ENCODE measurements at regions of chr1 and their contacts with region 1.

Region 1: DNA sequence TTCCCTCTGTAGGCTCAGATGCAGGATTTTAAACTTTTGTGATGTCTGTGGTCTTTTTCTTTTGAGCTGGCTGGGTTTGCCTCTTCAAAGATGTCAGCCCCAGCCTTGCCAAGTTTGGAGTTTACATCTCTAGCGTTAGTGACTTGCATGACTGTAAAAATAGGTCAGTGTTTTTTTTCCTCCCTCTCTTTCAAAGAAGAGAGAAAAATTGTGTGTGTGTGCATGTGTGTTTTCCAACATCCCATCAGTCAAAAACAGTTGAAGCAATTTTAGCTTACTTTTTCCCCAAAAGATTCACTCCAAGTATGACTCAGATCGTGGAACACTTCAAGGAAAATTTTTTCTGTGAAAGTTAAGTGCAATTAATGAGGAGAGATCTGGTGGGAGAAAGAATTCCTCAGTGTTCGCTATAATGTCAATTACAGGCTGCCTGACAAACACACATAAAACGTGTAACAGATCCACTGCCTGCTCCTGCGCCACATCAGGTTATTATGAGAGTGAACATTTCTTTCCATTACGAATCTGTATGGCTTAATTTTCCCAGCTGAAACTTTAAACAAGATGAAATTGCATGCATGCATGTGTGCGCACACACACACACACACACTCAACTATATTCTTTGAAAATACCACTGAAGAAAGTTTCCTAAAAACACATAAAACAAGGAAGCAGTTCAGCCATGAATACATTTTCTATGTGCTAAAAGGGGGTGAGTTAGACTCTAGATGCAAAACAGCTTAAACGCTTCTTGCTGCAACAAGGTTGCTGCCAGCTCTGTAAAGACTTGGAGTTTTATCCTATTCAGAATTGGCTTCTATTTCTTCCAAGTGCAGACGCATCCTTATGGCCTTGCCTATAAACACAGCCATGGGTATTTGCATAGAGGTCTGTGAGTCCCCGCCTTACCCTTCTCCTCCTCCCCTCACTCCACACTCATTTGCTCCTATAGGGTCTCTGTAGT is 55.5 kb downstream of the TLR5 start:
- DNase-seq: peak; percentile 87
- H3K4me3 ChIP-seq: peak overlapping the region in 1 of 4 donors; percentile 19
- H3K27ac ChIP-seq: peak overlapping the region; percentile 60 to 87 (median 78)
- H3K4me1 ChIP-seq: peaks cover 0 to 88% (median 74%) of the 10 kb centered on the region in 4 donors
- H3K27me3 ChIP-seq: no peaks in the 10 kb centered on the region
- CTCF ChIP-seq: no peak
- EP300 ChIP-seq: peak; percentile 2 to 66 (median 34)
- POLR2A ChIP-seq: no peak

Region 2: GRCh38 chr1:223114871-223115270 is 27.3 kb after region 1 on chr1:
- intact Hi-C with region 1: loop called (anchors 2 kb)
- DNase-seq: peak; percentile 78
- H3K4me3 ChIP-seq: no peak overlapping the region
- H3K27ac ChIP-seq: peak overlapping the region; percentile 45 to 86 (median 73)
- H3K4me1 ChIP-seq: peaks cover 0 to 31% (median 26%) of the 10 kb centered on the region in 4 donors
- H3K27me3 ChIP-seq: no peaks in the 10 kb centered on the region
- CTCF ChIP-seq: no peak
- EP300 ChIP-seq: peak in 3 of 4 donors; percentile 41 to 74 (median 68)
- POLR2A ChIP-seq: no peak

Region 3: GRCh38 chr1:223123011-223123610 is 35.5 kb after region 1 on chr1:
- intact Hi-C with region 1: loop called (anchors 2 kb)
- DNase-seq: no peak
- H3K4me3 ChIP-seq: no peak overlapping the region
- H3K27ac ChIP-seq: peak overlapping the region in 1 of 4 donors; percentile 30
- H3K4me1 ChIP-seq: peaks cover 0 to 7% (median 5%) of the 10 kb centered on the region in 4 donors
- H3K27me3 ChIP-seq: no peaks in the 10 kb centered on the region
- CTCF ChIP-seq: no peak
- EP300 ChIP-seq: no peak
- POLR2A ChIP-seq: no peak

Measured in sigmoid colon (tissue), 7 donors.